Gastrocnemius medialis (tissue), 4 donors: ENCODE measurements at regions of chr11 and their contacts with region 1.

Region 1: DNA sequence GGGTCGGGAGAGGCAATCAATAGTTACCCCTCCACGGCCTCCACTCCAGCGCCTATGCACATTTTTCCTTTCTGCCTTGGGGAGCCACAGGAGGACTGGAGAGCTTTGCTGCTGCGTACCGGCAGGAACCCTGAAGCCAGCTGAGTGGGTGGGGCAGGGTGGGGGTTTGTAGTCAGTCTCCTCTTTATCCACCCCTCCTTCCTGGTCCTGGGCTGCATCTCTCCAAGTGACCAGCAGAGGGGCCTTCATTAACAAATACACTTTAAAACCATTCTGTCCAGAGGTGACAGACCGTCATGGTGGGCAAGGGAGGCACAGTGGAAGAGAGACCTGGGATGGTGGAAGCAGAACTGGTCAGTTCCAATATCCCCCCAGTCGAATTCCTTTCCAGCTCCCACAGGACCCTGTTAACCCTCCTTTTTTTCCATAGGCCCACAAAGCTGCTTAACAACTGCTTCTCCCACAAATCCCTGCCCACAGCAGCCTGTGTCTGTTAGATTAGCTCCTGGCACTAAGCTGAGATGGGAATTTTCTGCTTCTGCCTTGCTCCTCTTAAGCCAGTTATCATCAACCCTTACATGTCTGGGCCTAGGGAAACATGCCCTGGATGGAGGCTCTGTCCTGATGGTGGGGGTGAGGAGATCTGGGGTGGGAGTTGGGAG is 3.9 kb upstream of the ABCG4 start:
- DNase-seq: peak; percentile 16 to 43
- ATAC-seq: peak; percentile 81 to 82
- H3K4me3 ChIP-seq: no peak overlapping the region
- H3K27ac ChIP-seq: no peak overlapping the region
- H3K4me1 ChIP-seq: peaks cover 4 to 14% of the 10 kb centered on the region in 2 donors
- H3K27me3 ChIP-seq: peaks cover 4 to 20% (median 7%) of the 10 kb centered on the region in 3 donors
- CTCF ChIP-seq: peak; percentile 39 to 72 (median 60)
- POLR2A ChIP-seq: no peak

Region 2: DNA sequence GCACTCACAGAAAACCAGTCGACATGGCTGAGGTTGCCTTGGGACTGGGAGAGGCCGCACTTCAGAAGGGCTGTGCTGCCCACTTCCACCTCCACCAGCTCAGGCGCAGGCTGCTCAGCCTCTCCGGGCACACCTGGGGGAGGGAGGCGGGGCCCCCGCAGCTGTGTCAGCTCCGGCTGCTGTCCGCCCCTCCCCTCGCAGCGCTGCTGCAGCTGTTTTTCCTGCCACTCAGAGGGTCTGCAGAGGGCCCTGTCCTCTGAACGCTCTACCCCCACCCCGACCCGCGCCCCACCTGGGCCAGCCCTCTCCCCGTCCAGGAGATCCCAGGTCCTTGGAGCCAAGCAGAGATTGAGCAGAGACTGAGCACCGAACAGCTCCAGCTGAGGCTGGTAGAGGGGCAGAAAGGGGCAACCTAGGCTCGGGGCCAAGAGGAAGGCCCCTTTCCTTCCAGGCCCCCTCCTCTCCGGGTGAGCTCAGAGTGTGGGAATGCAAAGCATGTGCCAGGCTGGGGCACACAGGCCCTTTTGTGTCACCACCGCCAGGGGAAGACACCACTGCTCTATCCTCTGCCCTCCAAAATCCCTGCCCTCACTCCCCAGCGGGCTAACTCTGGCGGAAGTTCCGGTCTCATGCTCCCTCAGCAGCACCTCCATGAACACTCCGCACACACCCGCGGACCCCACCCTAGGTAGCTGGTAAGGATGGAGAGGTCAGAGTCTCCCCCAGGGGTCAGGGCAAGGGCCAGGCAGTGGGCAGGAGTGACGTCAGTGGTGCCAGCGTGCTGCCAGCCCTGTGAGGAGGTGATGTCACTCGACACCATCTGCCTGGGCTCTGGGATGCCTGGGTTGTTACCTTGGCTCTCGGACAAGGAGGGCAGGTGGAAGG is 170.4 kb after region 1 on chr11:
- in situ Hi-C with region 1: no loop called
- intact Hi-C with region 1: loop called (anchors 5 kb)
- DNase-seq: no peak
- ATAC-seq: peak in 1 of 2 donors; percentile 14
- H3K4me3 ChIP-seq: peak overlapping the region; percentile 60 to 79 (median 69)
- H3K27ac ChIP-seq: peak overlapping the region; percentile 80 to 85 (median 83)
- H3K4me1 ChIP-seq: peaks cover 35 to 38% of the 10 kb centered on the region in 2 donors
- H3K27me3 ChIP-seq: peaks cover 0 to 3% (median 3%) of the 10 kb centered on the region in 3 donors
- CTCF ChIP-seq: peak in 2 of 5 experiments; percentile 13 to 18
- POLR2A ChIP-seq: no peak